GM12878 (cell line): ENCODE measurements at regions of chr2 and their contacts with region 1.

Region 1: DNA sequence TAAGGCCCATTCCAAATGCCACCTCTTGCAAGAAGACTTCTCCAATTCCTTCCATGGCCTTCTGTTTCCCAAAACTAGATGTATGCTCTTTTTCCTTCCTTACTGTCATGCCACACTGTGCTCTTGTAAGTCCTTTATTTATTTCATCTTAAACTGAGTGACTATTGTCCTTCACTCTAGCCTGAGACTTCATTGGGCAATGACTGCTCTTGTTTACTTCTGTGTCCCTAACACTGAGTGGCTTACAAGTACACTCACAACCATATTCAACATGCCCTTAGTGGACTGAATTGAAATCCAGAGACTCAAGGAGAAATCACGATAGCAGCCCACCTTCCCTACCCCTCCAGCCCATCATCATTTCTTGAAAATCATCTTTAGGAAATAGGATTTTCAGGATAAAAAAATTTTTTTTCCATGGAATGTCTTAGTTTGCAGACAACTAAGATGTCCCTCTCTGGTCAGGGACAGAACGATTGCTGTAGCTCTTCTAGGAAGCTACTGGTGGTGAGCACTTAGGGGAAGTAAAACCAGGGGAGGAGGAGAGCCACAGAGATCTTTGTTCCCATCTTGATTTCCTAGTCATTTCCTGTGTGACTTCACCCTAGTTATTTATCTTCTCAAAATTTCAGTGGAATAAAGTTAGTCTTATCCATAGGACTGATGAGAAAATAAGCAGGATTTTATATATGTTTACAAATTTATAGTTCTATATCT is 80.7 kb downstream of the CYRIA start:
- DNase-seq: no peak
- ATAC-seq: no peak
- H3K4me3 ChIP-seq: no peak overlapping the region
- H3K27ac ChIP-seq: no peak overlapping the region
- H3K4me1 ChIP-seq: no peaks in the 10 kb centered on the region
- H3K27me3 ChIP-seq: no peaks in the 10 kb centered on the region
- CTCF ChIP-seq: no peak
- EP300 ChIP-seq: no peak
- POLR2A ChIP-seq: no peak
- RAD21 ChIP-seq: no peak

Region 2: DNA sequence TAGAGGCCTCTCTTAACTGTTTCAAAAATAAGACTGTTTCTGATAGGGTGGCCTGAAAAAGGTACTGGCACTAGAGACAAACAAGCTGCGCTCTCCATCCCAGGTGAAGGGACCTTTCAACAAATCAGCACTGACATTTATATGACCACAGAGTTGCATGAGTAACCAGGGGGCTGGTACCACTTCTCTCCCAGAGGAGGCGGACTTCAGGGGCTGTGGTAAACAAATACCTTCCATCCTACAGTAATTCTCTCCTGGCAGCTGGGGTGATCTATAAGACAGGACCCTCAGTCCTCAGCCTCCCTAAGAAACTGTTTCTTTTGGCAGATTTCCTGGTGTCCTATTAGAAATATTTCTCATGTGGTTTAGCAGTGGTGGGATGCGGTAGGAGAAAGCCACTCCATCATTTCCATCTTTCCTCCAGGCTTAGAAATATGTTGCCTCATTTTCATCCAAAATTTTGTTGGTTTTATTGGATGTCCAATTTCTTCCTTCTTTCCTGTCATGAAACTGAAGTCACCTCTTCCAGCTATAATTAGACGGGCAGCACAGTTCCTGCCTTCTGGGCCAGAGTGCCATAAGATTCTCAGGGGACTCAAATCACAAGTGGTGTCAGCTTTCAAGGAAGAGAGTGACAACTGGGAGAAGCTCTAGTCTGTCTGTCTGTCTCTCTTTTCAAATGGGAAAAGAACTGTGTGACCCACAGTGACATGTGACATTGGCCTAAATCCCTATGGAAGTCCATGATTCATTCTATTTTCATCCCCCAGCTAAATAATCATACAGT is 15.8 kb before region 1 on chr2:
- CTCF ChIA-PET with region 1: interaction called, 11 read pairs
- POLR2A ChIA-PET with region 1: no interaction called
- RAD21 ChIA-PET with region 1: no interaction called
- SMC1A ChIA-PET with region 1: interaction called, 4 read pairs
- in situ Hi-C with region 1: no loop called
- intact Hi-C with region 1: no loop called
- DNase-seq: no peak
- ATAC-seq: no peak
- H3K4me3 ChIP-seq: no peak overlapping the region
- H3K27ac ChIP-seq: no peak overlapping the region
- H3K4me1 ChIP-seq: no peaks in the 10 kb centered on the region
- H3K27me3 ChIP-seq: no peaks in the 10 kb centered on the region
- CTCF ChIP-seq: no peak
- EP300 ChIP-seq: no peak
- POLR2A ChIP-seq: no peak
- RAD21 ChIP-seq: no peak

Region 3: DNA sequence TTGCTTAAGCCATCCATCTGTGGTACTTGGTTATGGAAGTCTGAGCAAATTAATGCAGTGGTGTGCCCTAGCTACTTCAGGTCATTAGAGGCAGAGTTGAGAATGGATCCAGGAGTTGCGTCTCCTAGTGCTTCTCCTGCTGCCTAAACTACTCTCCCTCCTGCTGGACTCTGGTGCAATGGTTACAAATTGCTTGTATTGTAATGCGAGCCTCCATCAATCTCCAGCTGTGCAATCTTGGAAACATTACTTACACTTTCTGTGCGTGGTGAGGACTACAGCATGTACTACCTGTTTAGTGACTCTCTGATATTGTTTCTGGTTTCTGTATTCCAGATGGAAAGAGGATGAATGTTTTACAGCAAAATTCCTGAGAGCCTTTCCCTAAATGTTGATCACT is 199.7 kb after region 1 on chr2:
- CTCF ChIA-PET with region 1: no interaction called
- POLR2A ChIA-PET with region 1: no interaction called
- RAD21 ChIA-PET with region 1: no interaction called
- SMC1A ChIA-PET with region 1: no interaction called
- in situ Hi-C with region 1: no loop called
- intact Hi-C with region 1: no loop called
- DNase-seq: no peak
- ATAC-seq: no peak
- H3K4me3 ChIP-seq: no peak overlapping the region
- H3K27ac ChIP-seq: no peak overlapping the region
- H3K4me1 ChIP-seq: no peaks in the 10 kb centered on the region
- H3K27me3 ChIP-seq: no peaks in the 10 kb centered on the region
- CTCF ChIP-seq: no peak
- EP300 ChIP-seq: no peak
- POLR2A ChIP-seq: no peak
- RAD21 ChIP-seq: no peak

Region 4: GRCh38 chr2:16890081-16890480 is 305.1 kb after region 1 on chr2:
- CTCF ChIA-PET with region 1: no interaction called
- POLR2A ChIA-PET with region 1: no interaction called
- RAD21 ChIA-PET with region 1: no interaction called
- SMC1A ChIA-PET with region 1: no interaction called
- in situ Hi-C with region 1: no loop called
- intact Hi-C with region 1: no loop called
- DNase-seq: no peak
- ATAC-seq: no peak
- H3K4me3 ChIP-seq: no peak overlapping the region
- H3K27ac ChIP-seq: no peak overlapping the region
- H3K4me1 ChIP-seq: no peaks in the 10 kb centered on the region
- H3K27me3 ChIP-seq: no peaks in the 10 kb centered on the region
- CTCF ChIP-seq: no peak
- EP300 ChIP-seq: no peak
- POLR2A ChIP-seq: no peak
- RAD21 ChIP-seq: no peak